Activated CD4-positive, alpha-beta memory T cell treated with anti-CD3 and anti-CD28 coated beads for 36 hours (primary cell): ENCODE measurements at regions of chr10 and their contacts with region 1.

Region 1: DNA sequence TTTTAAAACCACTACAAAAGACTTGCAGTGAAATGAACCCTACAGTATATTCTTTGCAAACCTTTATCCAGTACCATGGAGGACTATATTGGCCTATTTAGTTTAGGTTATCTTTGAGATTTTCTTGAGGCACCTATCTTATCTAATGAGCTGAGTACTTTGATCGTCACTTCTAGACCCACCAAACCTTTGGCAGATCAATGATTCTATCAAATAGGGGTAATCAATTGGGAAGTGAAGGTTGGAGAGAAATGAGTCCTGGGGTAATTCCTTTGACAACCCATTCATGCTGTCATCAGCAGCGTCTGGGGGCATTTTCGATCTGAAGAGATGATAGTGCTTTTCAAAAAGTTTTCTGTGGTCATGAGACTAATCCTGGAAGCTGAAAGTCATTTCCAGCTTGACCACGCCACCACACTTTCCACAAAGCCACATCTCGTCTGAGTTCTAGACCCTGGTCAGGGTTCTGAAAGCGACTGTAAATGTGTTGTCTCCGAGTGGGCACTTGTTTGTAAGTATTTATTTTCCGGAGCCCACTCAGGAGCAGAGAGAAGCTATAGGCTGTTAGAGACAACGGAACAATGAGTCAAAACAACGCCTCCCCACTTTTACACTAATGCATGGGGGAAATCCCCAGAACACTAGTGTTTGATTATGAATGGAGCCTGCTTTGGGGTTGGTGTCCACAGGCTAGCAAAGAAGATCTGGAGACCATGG is 4.8 kb downstream of the EGR2 start:
- DNase-seq: peak; percentile 94
- H3K4me3 Mint-ChIP-seq: peak overlapping the region; percentile 88
- H3K27ac Mint-ChIP-seq: peak overlapping the region; percentile 88
- H3K4me1 Mint-ChIP-seq: peaks cover 79% of the 10 kb centered on the region
- H3K27me3 Mint-ChIP-seq: no peaks in the 10 kb centered on the region

Region 2: GRCh38 chr10:62528441-62528840 is 282.9 kb before region 1 on chr10:
- CTCF ChIA-PET with region 1: no interaction called
- POLR2A ChIA-PET with region 1: no interaction called
- intact Hi-C with region 1: loop called (anchors 2 kb)
- DNase-seq: no peak
- H3K4me3 Mint-ChIP-seq: no peak overlapping the region
- H3K27ac Mint-ChIP-seq: peak overlapping the region; percentile 15
- H3K4me1 Mint-ChIP-seq: peaks cover 33% of the 10 kb centered on the region
- H3K27me3 Mint-ChIP-seq: peaks cover 11% of the 10 kb centered on the region

Region 3: GRCh38 chr10:62699148-62699547 is 112.2 kb before region 1 on chr10:
- CTCF ChIA-PET with region 1: no interaction called
- POLR2A ChIA-PET with region 1: no interaction called
- intact Hi-C with region 1: no loop called
- DNase-seq: no peak
- H3K4me3 Mint-ChIP-seq: no peak overlapping the region
- H3K27ac Mint-ChIP-seq: no peak overlapping the region
- H3K4me1 Mint-ChIP-seq: peaks cover 15% of the 10 kb centered on the region
- H3K27me3 Mint-ChIP-seq: peaks cover 5% of the 10 kb centered on the region

Region 4: DNA sequence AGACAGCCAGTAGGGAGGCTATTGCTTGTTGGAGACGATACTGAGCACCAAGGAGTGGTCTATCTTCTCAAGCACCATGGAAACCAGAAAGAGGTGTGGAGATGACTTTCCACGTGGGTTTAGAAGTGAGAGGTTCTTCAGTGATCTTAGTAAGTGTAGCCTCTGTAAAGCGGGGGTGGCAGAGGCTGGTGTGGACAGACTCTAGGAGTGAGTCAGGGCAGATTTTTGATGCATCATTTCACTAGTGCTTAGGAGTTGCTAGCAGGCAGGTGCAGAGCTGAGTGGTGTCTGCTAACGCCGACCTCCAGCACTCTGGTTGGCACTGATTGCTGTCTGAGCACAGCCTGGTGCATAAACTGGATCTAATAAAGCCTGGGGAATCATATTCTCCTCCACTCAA is 85.2 kb before region 1 on chr10:
- CTCF ChIA-PET with region 1: interaction called, 4 read pairs
- POLR2A ChIA-PET with region 1: interaction called, 4 read pairs
- intact Hi-C with region 1: loop called (anchors 1 kb)
- DNase-seq: peak; percentile 88
- H3K4me3 Mint-ChIP-seq: no peak overlapping the region
- H3K27ac Mint-ChIP-seq: peak overlapping the region; percentile 3
- H3K4me1 Mint-ChIP-seq: peaks cover 50% of the 10 kb centered on the region
- H3K27me3 Mint-ChIP-seq: peaks cover 4% of the 10 kb centered on the region

Region 5: DNA sequence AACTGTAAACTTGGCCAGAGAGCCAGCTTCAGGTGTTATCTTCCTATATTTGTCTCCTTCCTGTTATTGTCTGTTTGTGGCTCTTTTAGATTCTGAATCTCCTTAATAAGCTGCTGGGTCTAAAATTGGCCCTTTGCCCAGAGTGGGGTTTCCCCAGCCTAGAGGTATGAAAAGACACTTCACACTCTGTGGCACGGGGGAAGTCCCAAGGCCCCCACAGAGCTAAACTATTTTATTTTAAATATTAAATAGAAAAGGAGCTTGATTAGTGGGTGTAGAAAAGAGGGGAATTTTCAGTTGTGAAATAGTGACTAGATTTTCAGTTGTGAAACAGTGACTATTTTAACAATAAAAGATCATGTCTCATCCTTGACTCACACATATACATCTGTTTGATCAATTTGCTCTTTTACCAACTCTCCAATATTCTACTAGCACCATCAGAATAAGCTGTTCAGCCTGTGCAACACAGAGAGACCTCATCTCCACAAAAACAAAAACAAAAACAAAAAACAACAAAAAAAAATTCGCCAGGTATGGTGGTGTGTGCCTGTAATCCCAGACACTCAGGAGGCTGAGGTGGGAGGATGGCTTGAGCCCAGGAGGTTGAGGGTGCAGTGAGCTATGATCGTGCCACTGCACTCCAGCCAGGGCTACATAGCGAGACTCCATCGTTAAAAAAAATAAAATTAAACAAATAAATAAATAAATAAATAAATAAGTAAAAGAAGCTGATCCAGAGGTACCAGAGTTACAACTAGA is 31.6 kb before region 1 on chr10:
- CTCF ChIA-PET with region 1: interaction called, 12 read pairs
- POLR2A ChIA-PET with region 1: interaction called, 7 read pairs
- intact Hi-C with region 1: loop called (anchors 1 kb)
- DNase-seq: peak; percentile 89
- H3K4me3 Mint-ChIP-seq: no peak overlapping the region
- H3K27ac Mint-ChIP-seq: no peak overlapping the region
- H3K4me1 Mint-ChIP-seq: peaks cover 22% of the 10 kb centered on the region
- H3K27me3 Mint-ChIP-seq: peaks cover 1% of the 10 kb centered on the region

Region 6: DNA sequence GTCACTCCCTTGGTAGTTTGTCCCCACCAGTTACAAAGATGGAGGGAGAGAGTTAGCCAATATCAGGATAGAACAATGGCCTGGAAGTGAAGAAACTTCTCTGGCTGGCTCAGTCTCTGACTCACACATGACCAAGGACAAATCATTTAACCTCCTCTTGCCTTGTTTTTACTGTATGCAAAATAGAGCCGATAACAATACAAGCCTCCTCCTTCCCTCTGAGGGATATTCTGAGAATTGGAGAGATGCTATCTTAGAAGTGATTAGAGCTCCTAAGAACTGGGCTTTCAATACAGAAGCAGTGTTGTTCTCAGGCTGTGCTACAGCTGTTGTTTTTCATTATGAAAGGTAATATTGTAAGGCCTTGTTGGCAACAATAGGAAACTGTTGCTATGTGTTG is 92.5 kb after region 1 on chr10:
- CTCF ChIA-PET with region 1: no interaction called
- POLR2A ChIA-PET with region 1: no interaction called
- intact Hi-C with region 1: no loop called
- DNase-seq: no peak
- H3K4me3 Mint-ChIP-seq: no peak overlapping the region
- H3K27ac Mint-ChIP-seq: no peak overlapping the region
- H3K4me1 Mint-ChIP-seq: peaks cover 6% of the 10 kb centered on the region
- H3K27me3 Mint-ChIP-seq: peaks cover 5% of the 10 kb centered on the region

Region 7: DNA sequence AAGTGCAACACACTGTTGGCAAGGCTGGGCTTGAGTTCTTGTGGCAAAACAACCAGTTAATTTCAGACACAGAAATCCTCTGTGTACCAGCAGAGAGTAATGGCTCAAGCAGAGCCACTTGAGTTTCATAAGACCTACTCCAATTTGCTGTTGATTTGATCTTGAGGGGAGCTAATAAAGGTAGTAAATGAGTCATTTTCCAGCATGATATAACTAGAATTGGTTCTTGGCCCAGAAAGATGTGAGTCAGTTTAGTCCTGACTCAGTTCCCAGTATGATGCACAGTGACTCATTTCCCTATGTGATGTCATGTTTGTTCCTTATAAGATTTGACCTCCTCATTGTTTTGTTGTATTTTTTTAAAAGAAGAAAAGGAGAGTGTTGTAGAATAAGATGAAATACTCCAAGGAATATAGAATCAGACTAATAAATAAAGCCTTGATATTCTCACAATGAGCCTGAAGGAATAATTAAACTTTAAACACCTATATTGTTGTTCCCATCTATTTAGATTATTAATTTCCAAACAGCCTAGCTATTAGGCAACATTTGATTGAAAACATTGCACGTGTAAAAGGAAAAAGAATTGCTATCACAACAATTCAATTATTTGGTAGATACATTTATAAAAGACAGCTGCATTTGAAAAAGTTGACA is 896.1 kb after region 1 on chr10:
- CTCF ChIA-PET with region 1: no interaction called
- POLR2A ChIA-PET with region 1: no interaction called
- intact Hi-C with region 1: loop called (anchors 1 kb)
- DNase-seq: peak; percentile 48
- H3K4me3 Mint-ChIP-seq: no peak overlapping the region
- H3K27ac Mint-ChIP-seq: peak overlapping the region; percentile 20
- H3K4me1 Mint-ChIP-seq: peaks cover 12% of the 10 kb centered on the region
- H3K27me3 Mint-ChIP-seq: no peaks in the 10 kb centered on the region